ENCODE measurements at regions of chr12 and their contacts with region 1.

Region 1: GRCh38 chr12:67452119-67452805 is 183.1 kb downstream of the CAND1 start:
- DNase-seq: no peak
- H3K4me3 ChIP-seq: no peak overlapping the region
- H3K27ac ChIP-seq: no peak overlapping the region
- H3K4me1 ChIP-seq: no peaks in the 10 kb centered on the region
- H3K27me3 ChIP-seq: no peaks in the 10 kb centered on the region
- CTCF ChIP-seq: no peak
- EP300 ChIP-seq: no peak
- POLR2A ChIP-seq: no peak
- RAD21 ChIP-seq: no peak

Region 2: DNA sequence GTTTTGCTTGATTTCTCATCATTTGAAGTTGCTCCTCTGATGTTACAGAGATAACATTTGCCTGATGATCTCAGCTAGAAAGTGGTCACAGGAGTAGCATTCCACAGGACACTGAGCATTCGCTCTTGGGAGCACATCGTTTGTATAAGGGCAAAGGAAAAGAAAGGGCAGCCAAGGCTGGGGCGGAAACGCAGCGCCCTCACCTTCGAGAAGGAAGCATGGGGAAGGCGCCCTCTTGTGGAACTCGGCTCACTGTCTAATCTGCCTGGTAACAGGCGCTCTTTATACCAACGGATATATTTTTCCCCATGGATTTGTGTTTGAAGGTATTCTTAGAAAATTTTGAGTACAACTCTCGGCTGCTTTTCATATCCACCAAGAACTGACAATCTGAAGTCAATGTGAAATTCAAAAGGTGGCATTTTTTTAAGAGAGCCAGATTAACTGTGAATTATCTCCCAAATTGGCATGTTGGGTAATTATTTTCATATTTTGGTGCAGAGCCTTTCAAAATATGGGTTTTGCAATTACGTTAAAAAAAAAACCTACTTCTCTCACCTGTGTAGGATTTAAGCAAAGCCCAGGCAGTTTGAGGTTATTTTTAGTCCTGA is 10.4 kb before region 1 on chr12:
- CTCF ChIA-PET with region 1: interaction called, 22 read pairs
- POLR2A ChIA-PET with region 1: interaction called, 3 read pairs
- DNase-seq: peak; percentile 41 to 87
- H3K4me3 ChIP-seq: no peak overlapping the region
- H3K27ac ChIP-seq: no peak overlapping the region
- H3K4me1 ChIP-seq: peaks cover 0 to 4% (median 0%) of the 10 kb centered on the region in 4 experiments; a peak in 1 of 7 replicates
- H3K27me3 ChIP-seq: no peaks in the 10 kb centered on the region; a peak in 1 of 7 replicates
- CTCF ChIP-seq: peak; percentile 77 to 81 (median 79)
- EP300 ChIP-seq: no peak
- POLR2A ChIP-seq: no peak
- RAD21 ChIP-seq: peak; percentile 77 to 81

Region 3: DNA sequence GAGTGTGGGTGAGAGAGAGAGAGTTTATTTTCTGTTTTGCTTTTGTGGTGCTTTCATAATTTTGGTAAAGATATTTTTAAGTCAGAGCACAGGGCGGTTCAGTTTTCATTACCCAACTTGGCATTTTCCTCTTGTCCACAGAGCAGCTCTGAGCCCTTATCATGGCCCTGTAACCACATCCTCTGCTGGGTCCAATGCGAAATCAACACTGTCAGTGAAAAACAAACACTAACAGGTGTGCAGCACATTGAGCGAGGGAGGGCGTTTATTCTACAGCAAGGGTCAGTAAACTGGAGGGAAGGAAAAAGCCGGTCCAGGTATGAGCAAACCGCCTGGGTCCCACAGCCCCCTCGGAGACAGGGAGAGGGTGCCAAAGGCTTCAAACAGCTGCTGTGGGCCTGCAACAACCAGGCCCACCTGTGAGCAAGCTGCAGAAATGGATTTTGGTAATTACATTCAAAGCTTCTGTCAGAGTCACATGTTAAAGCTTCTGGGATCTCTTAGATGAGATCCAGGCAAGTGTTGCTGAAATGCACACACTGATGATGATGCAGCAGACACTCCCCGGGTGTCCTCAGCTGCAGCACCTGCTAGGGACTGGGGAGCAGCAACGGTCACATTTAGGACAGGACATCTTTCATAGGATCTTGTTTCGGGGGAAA is 63.5 kb after region 1 on chr12:
- CTCF ChIA-PET with region 1: no interaction called
- POLR2A ChIA-PET with region 1: no interaction called
- DNase-seq: no peak
- H3K4me3 ChIP-seq: no peak overlapping the region
- H3K27ac ChIP-seq: no peak overlapping the region
- H3K4me1 ChIP-seq: peaks cover 7 to 18% (median 10%) of the 10 kb centered on the region in 4 experiments; a peak in 6 of 7 replicates
- H3K27me3 ChIP-seq: no peaks in the 10 kb centered on the region
- CTCF ChIP-seq: no peak
- EP300 ChIP-seq: no peak
- POLR2A ChIP-seq: no peak
- RAD21 ChIP-seq: no peak

Measured in H1 (cell line).